Caco-2 (cell line): ENCODE measurements at regions of chr3 and their contacts with region 1.

Region 1: GRCh38 chr3:43162230-43163084 is 56.6 kb upstream of the POMGNT2 start:
- DNase-seq: no peak
- H3K4me3 ChIP-seq: no peak overlapping the region
- H3K4me3 Mint-ChIP-seq: no peak overlapping the region
- H3K27ac Mint-ChIP-seq: no peak overlapping the region
- H3K4me1 ChIP-seq: no peaks in the 10 kb centered on the region
- H3K4me1 Mint-ChIP-seq: no peaks in the 10 kb centered on the region
- H3K27me3 ChIP-seq: no peaks in the 10 kb centered on the region
- H3K27me3 Mint-ChIP-seq: peaks cover 3% of the 10 kb centered on the region
- CTCF ChIP-seq: peak in 1 of 2 experiments; percentile 48

Region 2: DNA sequence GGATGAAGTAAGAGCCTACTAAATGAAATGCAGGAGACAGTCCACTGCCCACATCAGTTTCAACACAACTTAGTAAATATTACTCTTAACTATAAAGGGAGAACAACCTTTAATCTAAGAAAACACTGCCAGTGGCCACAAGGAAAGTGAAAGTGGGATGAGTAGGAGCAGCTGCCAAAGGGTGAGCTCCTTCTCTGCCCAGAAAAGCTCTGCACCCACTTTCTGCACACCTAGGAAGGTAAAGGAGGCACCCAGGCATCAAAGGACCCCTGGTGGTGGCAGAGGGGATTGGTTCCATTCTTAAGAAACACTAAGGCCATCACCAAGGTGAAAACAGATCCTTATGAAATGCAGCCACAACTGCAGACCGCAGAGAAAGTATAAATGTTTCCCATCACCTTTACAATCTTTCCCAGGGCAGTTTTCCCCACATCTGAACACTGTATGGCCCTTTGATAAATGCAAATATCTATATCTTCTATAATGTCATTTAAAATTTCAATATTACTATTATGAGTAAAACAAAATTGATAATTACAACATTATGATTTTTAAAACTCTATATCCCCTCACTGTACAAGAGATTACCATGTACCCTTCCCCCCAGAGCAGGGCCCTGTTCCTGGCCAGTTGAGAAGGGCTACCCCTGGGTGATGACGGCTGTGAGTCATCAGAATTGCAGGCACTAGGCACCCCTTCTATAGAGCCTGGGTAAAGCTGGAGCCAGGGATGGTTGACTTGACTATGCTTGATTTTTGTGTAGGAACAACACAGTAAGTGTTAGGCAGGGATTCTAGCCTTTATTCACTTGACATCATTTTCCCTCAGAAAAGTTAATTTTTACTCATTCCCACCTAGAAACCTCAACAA is 215.8 kb after region 1 on chr3:
- CTCF ChIA-PET with region 1: interaction called, 5 read pairs
- POLR2A ChIA-PET with region 1: no interaction called
- intact Hi-C with region 1: loop called (anchors 1 kb)
- DNase-seq: peak; percentile 55 to 61
- H3K4me3 ChIP-seq: no peak overlapping the region
- H3K4me3 Mint-ChIP-seq: no peak overlapping the region
- H3K27ac Mint-ChIP-seq: no peak overlapping the region
- H3K4me1 ChIP-seq: no peaks in the 10 kb centered on the region
- H3K4me1 Mint-ChIP-seq: no peaks in the 10 kb centered on the region
- H3K27me3 ChIP-seq: no peaks in the 10 kb centered on the region
- H3K27me3 Mint-ChIP-seq: no peaks in the 10 kb centered on the region
- CTCF ChIP-seq: peak; percentile 66 to 82

Region 3: GRCh38 chr3:43405888-43406642 is 243.6 kb after region 1 on chr3:
- CTCF ChIA-PET with region 1: no interaction called
- POLR2A ChIA-PET with region 1: no interaction called
- intact Hi-C with region 1: no loop called
- DNase-seq: no peak
- H3K4me3 ChIP-seq: no peak overlapping the region
- H3K4me3 Mint-ChIP-seq: no peak overlapping the region
- H3K27ac Mint-ChIP-seq: no peak overlapping the region
- H3K4me1 ChIP-seq: 0 out of 2 replicates have a peak, but pooled peaks cover 1% of the 10 kb centered on the region
- H3K4me1 Mint-ChIP-seq: no peaks in the 10 kb centered on the region
- H3K27me3 ChIP-seq: no peaks in the 10 kb centered on the region
- H3K27me3 Mint-ChIP-seq: no peaks in the 10 kb centered on the region
- CTCF ChIP-seq: no peak

Region 4: GRCh38 chr3:43503067-43503728 is 340.7 kb after region 1 on chr3:
- CTCF ChIA-PET with region 1: interaction called, 7 read pairs
- POLR2A ChIA-PET with region 1: no interaction called
- intact Hi-C with region 1: loop called (anchors 2 kb)
- DNase-seq: no peak
- H3K4me3 ChIP-seq: no peak overlapping the region
- H3K4me3 Mint-ChIP-seq: no peak overlapping the region
- H3K27ac Mint-ChIP-seq: no peak overlapping the region
- H3K4me1 ChIP-seq: no peaks in the 10 kb centered on the region
- H3K4me1 Mint-ChIP-seq: no peaks in the 10 kb centered on the region
- H3K27me3 ChIP-seq: no peaks in the 10 kb centered on the region
- H3K27me3 Mint-ChIP-seq: no peaks in the 10 kb centered on the region
- CTCF ChIP-seq: peak in 1 of 2 experiments; percentile 49